HEK293 (cell line): ENCODE measurements at regions of chr12 and their contacts with region 1.

Region 1: DNA sequence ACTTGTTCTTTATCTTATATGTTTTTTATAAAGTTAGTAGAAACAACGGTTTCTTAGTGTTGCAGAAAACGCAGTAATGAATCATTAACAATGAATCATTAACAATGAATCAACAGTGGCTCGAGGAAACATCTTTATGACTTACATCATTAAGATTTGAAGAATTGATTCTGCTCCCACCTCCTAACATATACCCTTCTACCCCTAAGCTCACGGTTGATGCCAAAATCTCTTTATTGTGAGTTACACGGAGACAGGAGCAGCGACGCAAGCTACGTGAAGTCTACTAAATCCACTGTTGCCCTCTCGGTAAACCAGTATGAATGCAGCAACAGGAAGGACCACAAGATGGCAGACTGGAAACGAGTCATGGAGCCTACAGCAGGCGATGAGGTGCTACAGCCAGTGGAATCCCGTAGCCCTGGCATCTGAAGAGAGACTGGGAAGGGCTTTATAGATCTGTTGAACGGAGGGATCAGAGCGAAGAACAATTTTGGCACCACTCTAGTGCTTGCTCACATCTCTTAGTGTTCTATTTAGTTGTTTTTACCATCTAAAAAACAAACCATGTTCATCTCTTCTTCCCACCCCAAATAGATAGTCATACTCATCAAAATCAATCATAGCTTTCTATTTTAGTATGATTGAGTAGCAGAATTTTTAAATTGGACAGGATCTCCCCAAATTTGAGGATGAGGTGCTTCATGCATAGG is 332.7 kb downstream of the DUSP6 start:
- H3K4me3 ChIP-seq: peak overlapping the region; percentile 31
- H3K27ac ChIP-seq: no peak overlapping the region
- H3K4me1 ChIP-seq: 0 out of 2 replicates have a peak, but pooled peaks cover 2% of the 10 kb centered on the region
- CTCF ChIP-seq: peak; percentile 91

Region 2: DNA sequence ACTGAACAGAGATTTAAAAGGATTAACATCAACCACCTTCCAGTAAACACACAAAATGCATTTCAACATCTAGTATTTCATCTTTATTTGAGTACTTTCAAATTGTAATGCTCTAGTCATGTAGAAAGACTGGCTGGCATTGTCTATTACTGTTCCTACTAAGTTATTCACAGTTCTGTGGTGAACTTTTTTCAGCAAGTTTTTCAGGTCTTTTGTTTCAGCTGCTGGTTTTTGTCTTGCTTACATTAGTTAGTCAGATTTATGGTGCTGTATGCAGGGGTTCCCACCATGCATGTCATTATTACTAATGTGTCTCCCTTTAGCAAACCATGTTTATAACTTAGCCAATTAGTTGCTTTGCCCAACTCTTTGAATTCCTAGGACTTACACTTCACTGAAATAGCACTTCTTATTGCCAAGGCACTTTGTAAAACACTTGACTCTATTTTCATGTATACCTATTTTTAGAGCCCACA is 185.9 kb before region 1 on chr12:
- CTCF ChIA-PET with region 1: no interaction called
- POLR2A ChIA-PET with region 1: no interaction called
- H3K4me3 ChIP-seq: no peak overlapping the region
- H3K27ac ChIP-seq: no peak overlapping the region
- H3K4me1 ChIP-seq: no peaks in the 10 kb centered on the region
- CTCF ChIP-seq: no peak

Region 3: GRCh38 chr12:89029961-89030360 is 10.4 kb after region 1 on chr12:
- CTCF ChIA-PET with region 1: interaction called, 12 read pairs
- POLR2A ChIA-PET with region 1: no interaction called
- H3K4me3 ChIP-seq: no peak overlapping the region
- H3K27ac ChIP-seq: no peak overlapping the region
- H3K4me1 ChIP-seq: no peaks in the 10 kb centered on the region
- CTCF ChIP-seq: no peak

Region 4: DNA sequence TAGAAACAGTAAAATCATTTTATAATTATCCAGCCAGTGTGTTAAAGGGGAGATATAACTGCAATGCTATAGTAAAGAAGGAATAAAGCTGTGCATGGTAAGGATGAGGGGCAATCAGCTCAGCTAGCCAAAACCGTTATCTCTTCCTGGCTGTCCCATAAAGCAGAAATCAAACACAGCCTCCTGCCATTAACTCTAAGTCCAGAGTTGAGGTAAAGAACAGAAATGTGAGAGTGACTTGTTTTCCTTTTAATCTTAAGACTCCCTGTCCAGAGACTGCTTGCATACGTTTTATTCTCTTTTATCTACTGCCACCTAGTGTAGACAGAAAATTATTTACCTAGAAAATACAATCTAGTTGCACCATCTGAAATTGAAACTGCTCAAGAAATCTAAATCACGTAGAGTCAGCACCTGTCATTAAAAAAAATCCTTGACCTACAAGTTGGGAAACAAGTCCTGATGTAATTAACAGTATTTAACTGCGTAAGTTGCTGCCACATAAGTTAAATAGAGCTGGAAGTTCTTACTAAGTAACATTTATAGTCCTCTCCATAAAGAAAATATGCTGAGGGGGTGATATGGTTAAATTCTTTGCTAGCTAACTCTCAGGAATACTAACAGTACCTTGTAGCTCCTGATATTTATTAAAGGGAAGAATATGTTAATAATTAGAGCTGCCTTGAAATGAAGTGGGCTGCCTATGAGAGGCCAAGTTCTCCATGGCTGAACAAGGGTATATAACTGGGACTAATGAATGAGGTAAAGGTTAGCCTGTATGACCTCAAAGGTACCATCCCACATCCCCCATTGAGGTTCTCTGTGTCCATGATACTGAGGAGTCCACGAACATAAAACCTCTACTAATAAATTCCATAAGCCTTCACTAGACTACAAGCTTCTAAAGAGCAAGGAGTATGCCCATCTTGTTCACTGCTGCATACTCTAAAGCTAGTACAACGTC is 442.4 kb after region 1 on chr12:
- CTCF ChIA-PET with region 1: interaction called, 39 read pairs
- POLR2A ChIA-PET with region 1: no interaction called
- H3K4me3 ChIP-seq: no peak overlapping the region
- H3K27ac ChIP-seq: no peak overlapping the region
- H3K4me1 ChIP-seq: peaks cover 7% of the 10 kb centered on the region
- CTCF ChIP-seq: no peak; the same call in 1 of the 2 replicates

Region 5: DNA sequence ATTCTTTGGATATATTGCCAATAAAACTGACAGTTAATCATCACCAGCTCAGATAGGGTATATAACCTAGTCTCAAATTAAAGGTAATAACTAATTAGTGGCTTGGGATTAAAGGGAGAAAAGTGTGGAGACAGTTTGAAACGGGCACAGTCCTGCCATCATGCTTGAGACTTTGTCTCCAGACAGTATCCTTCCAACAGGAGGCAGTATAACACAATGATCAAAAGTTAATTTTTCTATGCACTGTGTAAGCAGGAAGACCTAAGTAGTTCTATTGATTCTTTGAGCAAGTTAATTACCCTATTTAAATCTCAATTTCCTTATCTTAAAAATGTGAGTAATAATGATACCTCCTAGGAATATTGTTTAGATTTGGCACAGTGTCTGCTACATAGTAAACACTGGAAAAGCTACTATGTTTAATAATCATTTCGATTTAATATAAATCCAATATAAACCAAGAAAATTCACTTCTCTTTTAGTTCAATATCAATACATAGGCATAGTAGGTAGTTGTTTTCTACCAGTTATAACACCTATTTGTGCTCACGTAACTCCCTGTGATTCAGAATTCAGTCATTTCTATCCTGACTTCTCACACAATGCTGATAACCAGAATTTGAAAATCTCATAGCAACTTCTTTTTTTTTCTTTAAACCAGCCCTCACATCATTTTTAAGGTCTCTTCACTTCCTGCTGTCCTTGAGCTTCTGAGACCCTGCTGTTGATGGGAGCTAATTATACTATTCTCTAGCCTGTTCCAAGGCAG is 451.4 kb after region 1 on chr12:
- CTCF ChIA-PET with region 1: interaction called, 13 read pairs
- POLR2A ChIA-PET with region 1: no interaction called
- H3K4me3 ChIP-seq: no peak overlapping the region
- H3K27ac ChIP-seq: no peak overlapping the region
- H3K4me1 ChIP-seq: peaks cover 2% of the 10 kb centered on the region
- CTCF ChIP-seq: no peak

Region 6: GRCh38 chr12:89524541-89525285 is 505.1 kb after region 1 on chr12 and contains the start of gene GALNT4:
- CTCF ChIA-PET with region 1: interaction called, 22 read pairs
- POLR2A ChIA-PET with region 1: interaction called, 3 read pairs
- H3K4me3 ChIP-seq: peak within 1 kb of the TSS; percentile 87
- H3K27ac ChIP-seq: peak within 1 kb of the TSS; percentile 78
- H3K4me1 ChIP-seq: no peaks in the 10 kb centered on the region
- CTCF ChIP-seq: peak; percentile 77

Region 7: DNA sequence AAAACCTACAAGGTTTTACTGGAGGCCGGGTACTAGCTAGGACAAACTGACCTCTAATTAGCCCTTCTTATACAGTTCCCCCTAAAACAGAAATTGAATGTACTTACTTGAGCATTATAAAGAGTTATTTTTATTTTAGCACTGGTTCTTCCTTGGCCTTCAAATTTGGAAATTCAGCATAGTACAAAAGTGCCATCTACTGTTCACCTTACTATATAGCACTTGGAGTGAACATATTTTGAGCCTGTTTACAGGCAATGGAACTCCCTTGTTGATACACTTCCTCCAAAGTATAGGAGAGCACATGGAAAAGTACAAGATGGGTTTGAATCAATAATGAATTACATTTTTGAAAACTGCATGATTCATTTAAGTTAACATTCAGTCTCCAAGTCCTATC is 510.2 kb after region 1 on chr12:
- CTCF ChIA-PET with region 1: interaction called, 22 read pairs
- POLR2A ChIA-PET with region 1: interaction called, 3 read pairs
- H3K4me3 ChIP-seq: no peak overlapping the region
- H3K27ac ChIP-seq: no peak overlapping the region
- H3K4me1 ChIP-seq: no peaks in the 10 kb centered on the region
- CTCF ChIP-seq: peak; percentile 44; the same call in 1 of the 2 replicates